Heart left ventricle (tissue), 16 donors: ENCODE measurements at regions of chr3 and their contacts with region 1.

Region 1: GRCh38 chr3:120404876-120405275 is 45.9 kb downstream of the FSTL1 start:
- DNase-seq: no peak
- ATAC-seq: peak; percentile 14 to 29 (median 21)
- H3K4me3 ChIP-seq: no peak overlapping the region
- H3K27ac ChIP-seq: peak overlapping the region in 1 of 12 donors; percentile 28
- H3K4me1 ChIP-seq: peaks cover 0 to 23% (median 0%) of the 10 kb centered on the region in 12 donors
- H3K27me3 ChIP-seq: no peaks in the 10 kb centered on the region
- CTCF ChIP-seq: no peak
- POLR2A ChIP-seq: no peak

Region 2: DNA sequence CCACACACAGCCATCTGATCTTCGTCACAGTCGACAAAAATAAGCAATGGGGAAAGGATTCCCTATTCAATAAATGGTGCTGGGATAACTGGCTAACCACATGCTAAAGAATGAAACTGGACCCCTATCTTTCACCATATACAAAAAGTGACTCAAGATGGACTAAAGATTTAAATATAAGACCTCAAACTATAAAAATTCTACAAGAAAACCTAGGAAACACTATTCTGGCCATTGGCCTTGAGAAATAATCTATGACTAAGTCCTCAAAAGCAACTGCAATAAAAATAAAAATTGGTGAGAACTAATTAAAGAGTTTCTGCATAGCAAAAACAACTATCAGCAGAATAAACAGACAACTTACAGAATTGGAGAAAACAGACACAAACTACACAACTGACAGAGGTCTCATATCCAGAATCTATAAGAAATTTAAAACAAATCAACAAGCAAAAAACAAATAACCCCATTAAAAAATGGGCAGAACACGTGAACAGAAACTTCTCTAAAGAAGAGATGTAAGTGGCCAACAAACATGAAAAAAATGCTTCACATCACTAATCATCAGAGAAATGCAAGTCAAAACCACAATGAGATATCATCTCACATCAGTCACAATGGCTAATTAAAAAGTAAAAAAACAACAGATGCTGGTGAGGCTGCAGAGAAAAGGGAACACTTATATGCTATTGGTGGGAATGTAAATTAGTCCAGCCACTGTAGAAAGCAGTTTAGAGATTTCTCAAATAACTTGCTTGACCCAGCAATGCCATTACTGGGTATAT is 518.9 kb before region 1 on chr3:
- intact Hi-C with region 1: loop called in 3 of 10 experiments (anchors 10 kb)
- DNase-seq: no peak
- ATAC-seq: no peak
- H3K4me3 ChIP-seq: no peak overlapping the region
- H3K27ac ChIP-seq: no peak overlapping the region
- H3K4me1 ChIP-seq: no peaks in the 10 kb centered on the region
- H3K27me3 ChIP-seq: no peaks in the 10 kb centered on the region
- CTCF ChIP-seq: no peak
- POLR2A ChIP-seq: no peak

Region 3: DNA sequence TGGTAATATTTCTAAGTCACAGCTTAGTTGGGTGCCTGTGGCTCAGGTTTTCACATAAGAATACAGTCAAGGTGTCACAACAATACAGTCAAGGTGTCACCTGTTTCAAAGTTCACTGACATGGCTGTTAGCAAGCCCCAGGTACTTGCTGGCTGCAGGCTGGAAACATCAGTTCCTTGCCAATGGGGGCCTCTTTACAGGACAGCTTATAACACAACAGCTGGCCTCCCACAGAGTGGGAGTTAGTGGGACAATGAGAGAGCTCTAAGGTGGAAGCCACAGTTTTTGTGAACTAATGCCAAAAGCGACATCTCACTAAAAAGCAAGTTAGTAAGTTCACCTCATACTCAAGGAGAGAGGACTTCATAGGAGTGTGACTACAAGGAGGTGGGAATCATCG is 165.2 kb before region 1 on chr3:
- intact Hi-C with region 1: loop called in 1 of 10 experiments (anchors 5 kb)
- DNase-seq: no peak
- ATAC-seq: no peak
- H3K4me3 ChIP-seq: no peak overlapping the region
- H3K27ac ChIP-seq: no peak overlapping the region
- H3K4me1 ChIP-seq: no peaks in the 10 kb centered on the region
- H3K27me3 ChIP-seq: peaks cover 0 to 8% (median 0%) of the 10 kb centered on the region in 9 donors
- CTCF ChIP-seq: no peak
- POLR2A ChIP-seq: no peak

Region 4: DNA sequence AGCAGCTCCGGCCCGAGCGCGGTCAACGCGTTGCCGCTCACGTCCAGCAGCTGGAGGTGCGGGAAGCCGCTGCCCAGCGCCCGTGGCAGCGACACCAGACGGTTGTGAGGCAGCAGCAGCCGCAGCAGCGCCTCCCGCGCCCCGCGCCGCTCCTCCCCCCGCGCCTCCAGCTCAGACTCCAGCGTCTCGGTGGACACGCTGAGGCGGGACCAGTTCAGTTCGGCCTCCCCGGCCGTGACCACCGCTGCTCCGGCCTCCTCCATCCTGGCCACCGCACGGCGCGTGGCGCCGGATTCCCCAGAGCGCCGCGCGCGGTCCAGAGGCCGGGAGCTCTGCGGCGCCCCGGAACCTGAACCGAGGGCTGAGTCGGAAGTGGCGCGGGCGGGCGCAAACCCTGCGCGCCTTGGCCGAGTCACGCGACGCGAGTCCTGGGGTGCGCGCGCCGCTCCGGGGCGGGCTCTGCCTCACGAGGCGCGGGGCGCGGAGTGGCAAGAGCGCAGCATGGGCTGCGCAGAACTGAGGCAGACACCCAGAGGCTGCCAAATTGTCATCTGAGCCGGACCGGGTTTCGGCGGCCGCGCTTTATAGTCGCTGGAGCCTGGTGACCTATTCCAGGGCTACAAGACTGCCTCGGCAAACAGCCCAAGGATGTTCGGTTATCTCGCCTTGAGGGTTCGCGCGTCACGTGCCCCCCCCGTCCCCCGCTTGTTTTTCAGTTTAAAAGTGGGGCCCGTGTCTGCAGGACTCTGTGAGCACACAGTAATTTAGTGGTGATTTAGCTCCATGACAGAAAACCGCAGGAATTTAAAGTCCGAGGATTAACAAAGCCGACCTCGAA is 55.7 kb before region 1 on chr3 and contains the start of gene LRRC58:
- intact Hi-C with region 1: loop called in 2 of 10 experiments (anchors 5 to 10 kb)
- DNase-seq: peak; percentile 88 to 96 (median 92)
- ATAC-seq: peak; percentile 97 to 98 (median 97)
- H3K4me3 ChIP-seq: peak within 1 kb of the TSS; percentile 69 to 97 (median 84)
- H3K27ac ChIP-seq: peak within 1 kb of the TSS; percentile 80 to 94 (median 88)
- H3K4me1 ChIP-seq: peaks cover 0 to 41% (median 16%) of the 10 kb centered on the region in 12 donors
- H3K27me3 ChIP-seq: no peaks in the 10 kb centered on the region
- CTCF ChIP-seq: peak in 8 of 12 donors; percentile 10 to 54 (median 31)
- POLR2A ChIP-seq: peak; percentile 9 to 83
- total RNA-seq, gene LRRC58: 7.1 to 17.9 (median 10.5) TPM

Region 5: DNA sequence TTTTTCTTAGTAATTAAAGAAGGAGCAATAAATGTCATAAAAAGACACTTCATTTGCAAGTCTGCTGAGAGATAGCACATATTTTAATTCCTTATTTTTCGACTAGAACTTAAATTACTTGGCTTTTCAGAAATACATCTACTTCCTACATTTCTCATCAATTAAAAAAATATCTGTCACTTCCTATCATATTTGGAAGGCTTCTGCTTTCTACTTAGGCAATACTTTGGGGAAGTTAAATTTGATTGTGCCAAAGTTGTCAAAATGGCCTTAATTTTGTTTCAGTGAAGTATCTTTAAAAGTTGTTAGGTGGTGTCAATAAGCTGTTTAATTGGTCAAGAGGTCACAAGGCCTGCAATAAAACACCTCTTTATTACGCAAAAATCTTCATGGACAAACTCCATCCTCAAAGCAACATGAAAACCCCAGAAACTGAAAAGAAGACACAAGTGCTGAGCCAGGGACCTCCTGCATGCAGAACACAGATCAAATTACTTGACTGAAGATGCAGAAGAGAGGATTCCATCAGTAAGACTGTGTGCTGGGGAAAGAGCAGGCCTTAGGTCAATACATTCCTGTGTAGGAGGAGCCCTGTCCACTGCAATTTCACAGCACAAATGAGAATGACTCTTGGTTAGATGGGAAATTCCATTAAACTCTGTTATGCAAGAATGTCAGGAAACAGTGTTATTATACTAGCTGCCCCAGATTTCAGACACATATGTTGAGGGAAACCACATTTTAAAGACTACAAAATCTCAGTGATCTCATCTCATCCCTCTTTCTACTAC is 93.9 kb after region 1 on chr3:
- intact Hi-C with region 1: no loop called
- DNase-seq: no peak
- ATAC-seq: peak in 3 of 4 donors; percentile 57 to 78 (median 67)
- H3K4me3 ChIP-seq: no peak overlapping the region
- H3K27ac ChIP-seq: peak overlapping the region in 5 of 12 donors; percentile 9 to 56 (median 44)
- H3K4me1 ChIP-seq: peaks cover 0 to 36% (median 3%) of the 10 kb centered on the region in 12 donors
- H3K27me3 ChIP-seq: no peaks in the 10 kb centered on the region
- CTCF ChIP-seq: no peak
- POLR2A ChIP-seq: no peak